K562 (cell line): ENCODE measurements at regions of chr4 and their contacts with region 1.

Region 1: GRCh38 chr4:153528705-153529485 is 62.7 kb downstream of the TMEM131L start:
- DNase-seq: peak; percentile 83 to 90 (median 88)
- ATAC-seq: peak; percentile 95
- H3K4me3 ChIP-seq: peak overlapping the region; percentile 7; the same call in 1 of the 2 replicates
- H3K27ac ChIP-seq: peak overlapping the region; percentile 38; the same call in 2 of the 3 replicates
- H3K4me1 ChIP-seq: peaks cover 7 to 34% of the 10 kb centered on the region in 2 experiments; a peak in 4 of 5 replicates
- H3K27me3 ChIP-seq: no peaks in the 10 kb centered on the region
- CTCF ChIP-seq: no peak
- EP300 ChIP-seq: peak; percentile 81
- POLR2A ChIP-seq: no peak
- RAD21 ChIP-seq: no peak

Region 2: GRCh38 chr4:152784490-152785350 is 744.2 kb before region 1 on chr4:
- CTCF ChIA-PET with region 1: no interaction called
- POLR2A ChIA-PET with region 1: no interaction called
- in situ Hi-C with region 1: no loop called
- intact Hi-C with region 1: no loop called
- DNase-seq: peak; percentile 12 to 39 (median 26)
- ATAC-seq: no peak
- H3K4me3 ChIP-seq: no peak overlapping the region
- H3K27ac ChIP-seq: no peak overlapping the region
- H3K4me1 ChIP-seq: peaks cover 0 to 3% of the 10 kb centered on the region in 2 experiments; a peak in 2 of 5 replicates
- H3K27me3 ChIP-seq: no peaks in the 10 kb centered on the region
- CTCF ChIP-seq: 0 out of 6 replicates have a peak, but pooled peaks of 1 of the 3 experiments have one; percentile 12
- EP300 ChIP-seq: no peak
- POLR2A ChIP-seq: no peak
- RAD21 ChIP-seq: peak in 1 of 2 experiments; percentile 13; a peak in 1 of 4 replicates

Region 3: DNA sequence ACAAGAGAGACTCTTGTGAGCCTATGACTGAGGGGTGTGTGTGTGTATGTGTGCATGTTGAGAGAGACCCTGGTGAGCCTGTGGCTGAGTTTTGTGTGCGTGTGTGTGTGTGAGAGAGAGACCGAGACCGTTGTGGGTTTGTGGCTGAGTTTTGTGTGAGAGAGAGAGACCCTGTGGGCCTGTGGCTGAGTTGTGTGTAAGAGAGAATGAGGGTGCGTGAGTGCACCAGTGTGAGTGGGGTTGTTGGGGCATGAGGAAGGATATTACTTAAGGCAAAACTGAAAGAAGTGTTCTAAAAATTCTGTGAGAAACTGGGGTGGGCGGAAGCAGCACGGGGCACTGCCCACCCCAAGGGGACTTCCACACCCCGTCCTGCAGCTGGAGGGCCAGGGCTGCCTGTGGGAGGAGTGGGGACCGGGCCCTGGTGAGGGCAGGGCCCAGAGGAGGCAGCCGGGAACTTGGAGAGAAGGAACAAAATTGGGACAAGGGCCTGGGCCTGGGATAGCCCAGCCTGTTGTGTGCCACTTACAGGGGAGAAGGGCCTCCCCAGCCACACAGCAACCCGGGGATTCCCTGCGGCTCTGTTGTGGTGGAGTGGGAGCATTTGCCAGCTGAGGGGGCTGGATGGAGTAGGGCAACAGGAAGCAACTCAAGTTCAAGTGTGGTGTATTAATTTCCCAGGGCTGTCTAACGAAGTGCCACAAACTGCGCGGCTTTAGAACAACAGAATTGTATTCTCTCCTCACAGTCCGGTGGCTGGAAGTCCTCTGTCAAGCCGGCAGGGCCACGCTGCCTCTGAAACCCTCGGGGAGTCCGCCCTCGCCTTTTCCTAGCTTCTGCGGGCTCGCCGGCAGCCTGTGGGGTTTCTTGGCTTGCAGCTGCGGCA is 40.6 kb before region 1 on chr4:
- CTCF ChIA-PET with region 1: no interaction called
- POLR2A ChIA-PET with region 1: interaction called, 3 read pairs
- in situ Hi-C with region 1: no loop called
- intact Hi-C with region 1: loop called (anchors 2 kb)
- DNase-seq: no peak
- ATAC-seq: no peak
- H3K4me3 ChIP-seq: no peak overlapping the region
- H3K27ac ChIP-seq: no peak overlapping the region; the same call in 2 of the 3 replicates
- H3K4me1 ChIP-seq: peaks cover 33% of the 10 kb centered on the region in 2 experiments
- H3K27me3 ChIP-seq: no peaks in the 10 kb centered on the region
- CTCF ChIP-seq: no peak
- EP300 ChIP-seq: no peak
- POLR2A ChIP-seq: no peak
- RAD21 ChIP-seq: no peak

Region 4: DNA sequence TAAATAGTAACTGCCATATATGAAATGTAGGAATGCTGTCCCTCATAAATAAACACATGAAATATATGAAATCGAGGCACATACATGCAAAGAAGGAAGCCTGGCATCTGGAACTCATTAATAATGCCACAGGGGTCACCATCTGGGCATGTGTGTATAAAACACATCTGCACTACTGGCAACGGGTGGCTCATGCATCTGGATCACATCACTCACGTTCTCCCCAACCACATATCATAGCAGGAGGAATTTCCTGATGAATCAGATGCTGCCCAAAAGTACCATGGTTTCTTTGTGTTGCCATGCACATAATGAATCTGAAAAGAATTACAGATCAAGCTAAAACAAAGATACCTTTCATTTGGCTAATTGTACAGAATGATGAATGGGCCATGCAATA is 202.3 kb after region 1 on chr4:
- CTCF ChIA-PET with region 1: no interaction called
- POLR2A ChIA-PET with region 1: no interaction called
- in situ Hi-C with region 1: no loop called
- intact Hi-C with region 1: no loop called
- DNase-seq: no peak
- ATAC-seq: no peak
- H3K4me3 ChIP-seq: no peak overlapping the region
- H3K27ac ChIP-seq: no peak overlapping the region
- H3K4me1 ChIP-seq: no peaks in the 10 kb centered on the region
- H3K27me3 ChIP-seq: peaks cover 5 to 7% of the 10 kb centered on the region in 2 experiments; a peak in 3 of 5 replicates
- CTCF ChIP-seq: no peak
- EP300 ChIP-seq: no peak
- POLR2A ChIP-seq: no peak
- RAD21 ChIP-seq: no peak